AG04450 (cell line): ENCODE measurements at regions of chr19 and their contacts with region 1.

Region 1: DNA sequence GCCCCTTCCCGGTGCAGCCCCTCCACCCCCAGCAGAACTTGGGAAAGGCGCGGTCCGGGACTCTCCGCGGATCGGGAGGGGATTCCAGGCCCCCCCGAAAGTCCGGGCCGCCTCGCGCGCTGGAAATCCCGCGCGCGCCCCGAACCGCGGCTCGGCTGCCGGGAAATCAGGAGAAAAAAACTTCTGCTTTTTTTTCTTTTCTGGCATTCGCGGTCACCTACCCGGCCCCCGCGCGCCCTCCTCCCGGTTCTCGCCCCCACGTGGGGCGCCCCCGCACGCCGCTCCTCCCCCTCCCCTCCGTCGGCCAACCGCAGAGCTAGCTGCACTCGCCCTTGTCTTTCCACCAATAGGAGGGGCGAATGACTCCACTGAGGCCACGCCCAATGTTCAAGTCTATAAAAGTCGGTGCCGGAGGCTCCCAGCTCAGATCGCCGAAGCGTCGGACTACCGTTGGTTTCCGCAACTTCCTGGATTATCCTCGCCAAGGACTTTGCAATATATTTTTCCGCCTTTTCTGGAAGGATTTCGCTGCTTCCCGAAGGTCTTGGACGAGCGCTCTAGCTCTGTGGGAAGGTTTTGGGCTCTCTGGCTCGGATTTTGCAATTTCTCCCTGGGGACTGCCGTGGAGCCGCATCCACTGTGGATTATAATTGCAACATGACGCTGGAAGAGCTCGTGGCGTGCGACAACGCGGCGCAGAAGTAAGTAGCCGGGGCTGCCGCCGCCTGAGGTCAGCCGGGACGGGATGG is at the start of gene GADD45B:
- DNase-seq: peak; percentile 97
- H3K4me3 ChIP-seq: peak within 1 kb of the TSS; percentile 94
- H3K27ac ChIP-seq: peak within 1 kb of the TSS; percentile 77
- H3K27me3 ChIP-seq: no peaks in the 10 kb centered on the region
- CTCF ChIP-seq: no peak
- polyA plus RNA-seq, gene GADD45B: 18.5 and 24.8 TPM in 2 replicates

Region 2: DNA sequence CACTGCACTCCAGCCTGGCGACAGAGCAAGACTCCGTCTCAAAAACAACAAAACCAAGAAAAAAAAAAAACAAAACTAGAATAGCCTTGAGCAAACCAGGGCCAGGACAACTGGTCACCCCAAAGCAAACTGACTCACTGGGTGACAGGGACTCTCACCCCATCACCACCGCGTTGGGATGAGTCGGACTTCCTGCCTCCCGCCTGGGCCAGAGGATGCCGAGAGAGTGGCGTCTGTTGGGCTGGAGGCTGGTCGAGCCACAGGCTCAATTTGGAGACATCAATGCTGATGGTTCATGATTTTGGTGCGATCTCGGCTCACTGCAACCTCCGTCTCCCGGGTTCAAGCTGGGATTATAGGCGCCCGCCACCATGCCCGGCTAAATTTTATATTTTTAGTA is 104.2 kb before region 1 on chr19:
- CTCF ChIA-PET with region 1: no interaction called
- POLR2A ChIA-PET with region 1: no interaction called
- DNase-seq: no peak
- H3K4me3 ChIP-seq: no peak overlapping the region
- H3K27ac ChIP-seq: no peak overlapping the region
- H3K27me3 ChIP-seq: no peaks in the 10 kb centered on the region
- CTCF ChIP-seq: no peak

Region 3: GRCh38 chr19:2427429-2428320 is 48.2 kb before region 1 on chr19 and contains the start of gene TIMM13:
- CTCF ChIA-PET with region 1: no interaction called
- POLR2A ChIA-PET with region 1: interaction called, 34 read pairs
- DNase-seq: peak; percentile 91
- H3K4me3 ChIP-seq: peak within 1 kb of the TSS; percentile 88
- H3K27ac ChIP-seq: peak within 1 kb of the TSS; percentile 94
- H3K27me3 ChIP-seq: no peaks in the 10 kb centered on the region
- CTCF ChIP-seq: no peak
- polyA plus RNA-seq, gene TIMM13: 21.6 and 34.3 TPM in 2 replicates

Region 4: DNA sequence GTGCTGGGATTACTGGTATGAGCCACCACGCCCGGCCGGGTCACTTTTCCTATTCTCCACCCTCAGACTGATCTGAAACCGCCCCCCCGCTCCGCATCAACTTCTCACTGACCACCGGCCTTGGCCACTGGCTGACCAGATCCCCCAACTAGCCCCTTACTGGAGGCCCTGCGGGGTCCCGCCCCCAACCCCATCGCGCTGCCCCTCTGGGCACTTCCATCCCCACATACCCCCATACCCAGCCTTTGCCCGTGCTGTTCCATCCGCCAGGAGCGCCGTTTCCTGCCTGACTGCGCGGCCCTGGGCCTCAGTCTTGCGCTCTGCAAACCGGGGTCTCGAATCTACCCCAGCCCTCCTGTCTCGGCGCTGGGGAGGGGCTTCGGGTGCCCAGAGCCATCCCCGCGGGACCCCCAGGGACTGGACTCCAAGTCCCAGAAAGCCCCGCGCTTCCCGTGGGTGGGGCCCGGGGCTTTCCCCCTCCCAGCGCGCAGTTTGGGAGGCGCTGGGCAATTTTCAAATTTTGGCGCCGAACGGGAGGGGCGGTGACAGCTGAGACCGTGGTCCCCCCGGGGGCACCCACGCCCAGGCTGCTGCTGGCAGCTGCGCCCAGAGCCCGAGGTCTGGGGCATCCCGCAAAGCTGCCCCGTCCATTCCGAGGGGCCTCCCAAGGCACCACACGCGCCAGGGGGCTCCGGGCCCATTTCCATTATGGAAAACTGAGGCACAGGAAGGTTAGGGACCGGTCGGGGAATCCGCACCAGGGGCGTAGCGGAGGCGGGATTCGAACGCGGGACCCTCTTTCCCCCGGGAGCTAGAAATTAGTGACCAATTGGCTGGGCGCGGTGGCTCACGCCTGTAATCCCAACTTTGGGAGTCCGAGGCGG is 13.9 kb before region 1 on chr19:
- CTCF ChIA-PET with region 1: interaction called, 6 read pairs
- POLR2A ChIA-PET with region 1: interaction called, 46 read pairs
- DNase-seq: no peak
- H3K4me3 ChIP-seq: peak overlapping the region; percentile 73
- H3K27ac ChIP-seq: no peak overlapping the region
- H3K27me3 ChIP-seq: no peaks in the 10 kb centered on the region
- CTCF ChIP-seq: peak; percentile 25

Region 5: GRCh38 chr19:2507109-2507508 is 31.2 kb after region 1 on chr19:
- CTCF ChIA-PET with region 1: no interaction called
- POLR2A ChIA-PET with region 1: interaction called, 22 read pairs
- DNase-seq: no peak
- H3K4me3 ChIP-seq: peak overlapping the region; percentile 15
- H3K27ac ChIP-seq: peak overlapping the region; percentile 63
- H3K27me3 ChIP-seq: no peaks in the 10 kb centered on the region
- CTCF ChIP-seq: no peak

Region 6: GRCh38 chr19:2543463-2544442 is 67.9 kb after region 1 on chr19:
- CTCF ChIA-PET with region 1: interaction called, 4 read pairs
- POLR2A ChIA-PET with region 1: interaction called, 266 read pairs
- DNase-seq: peak; percentile 93
- H3K4me3 ChIP-seq: peak overlapping the region; percentile 39
- H3K27ac ChIP-seq: peak overlapping the region; percentile 99
- H3K27me3 ChIP-seq: no peaks in the 10 kb centered on the region
- CTCF ChIP-seq: peak; percentile 38

Region 7: DNA sequence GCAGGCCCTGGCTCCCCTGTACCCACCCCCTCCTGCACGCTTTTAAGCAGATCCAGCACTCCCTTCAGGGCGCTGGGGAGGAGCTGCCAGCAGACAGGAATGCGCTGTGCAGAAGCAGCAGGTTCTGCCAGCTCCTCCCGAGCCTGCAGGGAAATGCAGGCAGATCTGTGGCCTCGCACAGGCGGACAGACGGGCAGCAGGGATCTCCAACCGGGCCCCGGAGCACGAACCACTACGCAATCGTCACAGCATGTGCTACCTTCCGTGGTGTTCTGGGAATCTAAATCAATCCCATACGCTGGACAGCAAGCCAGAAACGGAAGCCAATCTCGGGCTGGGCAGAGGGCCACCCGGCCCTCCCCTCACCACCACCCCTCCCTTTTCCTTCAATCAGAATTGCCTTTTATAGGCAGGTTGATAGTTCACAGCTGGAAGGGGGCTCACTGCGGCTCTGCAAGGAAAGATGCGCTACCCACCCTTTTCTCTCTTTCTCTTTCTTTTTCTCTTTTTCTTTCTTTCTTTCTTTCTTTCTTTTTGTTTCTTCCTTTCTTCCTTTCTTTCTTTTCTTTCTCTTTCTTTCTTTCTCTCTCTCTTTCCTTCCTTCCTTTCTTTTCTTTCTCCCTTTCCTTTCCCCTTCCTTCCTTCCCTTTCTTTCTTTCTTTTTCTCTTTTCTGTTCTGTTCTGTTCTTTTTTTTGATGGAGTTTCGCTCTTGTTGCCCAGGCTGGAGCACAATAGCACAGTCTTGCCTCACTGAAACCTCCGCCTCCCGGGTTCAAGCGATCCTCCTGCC is 126.7 kb after region 1 on chr19:
- CTCF ChIA-PET with region 1: interaction called, 7 read pairs
- POLR2A ChIA-PET with region 1: interaction called, 167 read pairs
- DNase-seq: peak; percentile 80
- H3K4me3 ChIP-seq: peak overlapping the region; percentile 31
- H3K27ac ChIP-seq: peak overlapping the region; percentile 68
- H3K27me3 ChIP-seq: no peaks in the 10 kb centered on the region
- CTCF ChIP-seq: 0 out of 2 replicates have a peak, but pooled peaks have one; percentile 13

Region 8: DNA sequence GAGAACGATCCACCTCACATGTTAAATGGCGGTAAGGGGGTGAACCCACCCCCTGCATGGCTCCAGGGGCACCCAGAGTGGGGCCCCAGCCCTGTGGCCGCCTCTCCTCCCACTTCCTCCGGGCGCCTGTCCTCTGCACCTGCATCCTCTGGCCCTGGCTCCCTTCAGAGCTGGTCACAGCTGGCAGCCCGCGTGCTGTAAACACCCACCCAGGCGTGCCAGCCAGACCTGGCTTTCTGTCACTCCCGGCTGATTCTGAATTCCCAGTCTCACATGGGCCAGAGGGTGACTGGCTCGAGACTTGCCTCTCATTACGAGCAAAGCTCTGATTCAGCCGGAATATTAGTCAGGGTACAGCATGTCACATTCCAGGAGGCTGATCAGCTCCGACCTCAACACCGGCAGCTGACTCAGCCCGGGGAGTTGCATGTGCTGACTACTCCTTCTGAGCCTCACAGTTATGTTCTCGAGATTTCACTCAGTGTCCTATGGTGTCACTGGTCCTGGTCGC is 151.5 kb after region 1 on chr19:
- CTCF ChIA-PET with region 1: no interaction called
- POLR2A ChIA-PET with region 1: interaction called, 29 read pairs
- DNase-seq: peak; percentile 90
- H3K4me3 ChIP-seq: no peak overlapping the region
- H3K27ac ChIP-seq: peak overlapping the region; percentile 93
- H3K27me3 ChIP-seq: no peaks in the 10 kb centered on the region
- CTCF ChIP-seq: no peak